Prostate gland (tissue), 2 donors: ENCODE measurements at regions of chr3 and their contacts with region 1.

Region 1: GRCh38 chr3:30768703-30769685 is 125.5 kb downstream of the GADL1 start:
- DNase-seq: peak; percentile 47
- H3K4me3 ChIP-seq: no peak overlapping the region
- H3K27ac ChIP-seq: no peak overlapping the region
- H3K4me1 ChIP-seq: no peaks in the 10 kb centered on the region
- H3K27me3 ChIP-seq: no peaks in the 10 kb centered on the region
- CTCF ChIP-seq: peak; percentile 39 to 72 (median 64)
- POLR2A ChIP-seq: no peak

Region 2: GRCh38 chr3:31132132-31132769 is 363.3 kb after region 1 on chr3:
- intact Hi-C with region 1: loop called (anchors 2 kb)
- DNase-seq: no peak
- H3K4me3 ChIP-seq: no peak overlapping the region
- H3K27ac ChIP-seq: no peak overlapping the region
- H3K4me1 ChIP-seq: no peaks in the 10 kb centered on the region
- H3K27me3 ChIP-seq: no peaks in the 10 kb centered on the region
- CTCF ChIP-seq: peak; percentile 14 to 65 (median 56)
- POLR2A ChIP-seq: no peak